ENCODE measurements at regions of chr14 and their contacts with region 1.

Region 1: GRCh38 chr14:67619446-67620216 is at the start of gene ARG2:
- DNase-seq: peak; percentile 98
- H3K4me3 Mint-ChIP-seq: peak within 1 kb of the TSS; percentile 87
- H3K27ac Mint-ChIP-seq: peak within 1 kb of the TSS; percentile 69
- H3K4me1 Mint-ChIP-seq: peaks cover 42% of the 10 kb centered on the region
- H3K27me3 Mint-ChIP-seq: peaks cover 4% of the 10 kb centered on the region
- total RNA-seq, gene ARG2: 20.3 to 20.8 TPM

Region 2: GRCh38 chr14:67583711-67584644 is 35.7 kb before region 1 on chr14:
- CTCF ChIA-PET with region 1: no interaction called
- intact Hi-C with region 1: loop called (anchors 1 kb)
- DNase-seq: peak; percentile 61
- H3K4me3 Mint-ChIP-seq: no peak overlapping the region
- H3K27ac Mint-ChIP-seq: no peak overlapping the region
- H3K4me1 Mint-ChIP-seq: no peaks in the 10 kb centered on the region
- H3K27me3 Mint-ChIP-seq: no peaks in the 10 kb centered on the region

Region 3: DNA sequence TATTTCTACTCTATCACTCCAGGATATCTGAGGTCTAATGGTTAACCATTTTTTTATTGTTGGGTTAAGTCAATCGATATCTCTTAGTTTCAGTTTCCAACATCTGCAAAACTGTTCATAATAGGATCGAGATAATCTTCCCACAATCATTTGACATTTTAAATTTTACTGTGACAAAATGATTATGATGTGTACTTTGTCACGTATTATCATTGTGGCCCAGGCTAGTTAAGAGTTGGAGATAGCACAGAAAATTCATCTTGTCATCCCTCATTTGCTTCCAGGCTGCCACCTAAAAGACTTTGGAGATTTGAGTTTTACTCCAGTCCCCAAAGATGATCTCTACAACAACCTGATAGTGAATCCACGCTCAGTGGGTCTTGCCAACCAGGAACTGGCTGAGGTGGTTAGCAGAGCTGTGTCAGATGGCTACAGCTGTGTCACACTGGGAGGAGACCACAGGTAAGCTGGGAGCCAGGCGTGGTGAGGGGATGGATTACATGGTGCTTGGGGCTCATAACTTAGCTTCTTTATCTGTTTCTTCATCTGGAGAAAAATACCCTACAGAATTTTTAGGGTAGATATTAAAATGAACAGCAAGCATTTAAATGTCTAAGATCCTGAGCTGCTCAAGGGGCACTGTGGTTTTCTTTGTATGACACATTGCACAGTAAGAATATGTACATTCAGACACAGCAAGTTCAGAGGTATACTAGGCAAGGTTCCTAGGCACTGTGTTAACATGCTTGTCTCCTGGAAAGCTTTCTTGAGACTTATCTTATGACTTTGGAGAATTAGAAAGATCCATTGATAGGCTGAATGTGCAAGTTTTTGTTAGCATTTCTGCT is 22.5 kb after region 1 on chr14:
- CTCF ChIA-PET with region 1: interaction called, 10 read pairs
- intact Hi-C with region 1: no loop called
- DNase-seq: no peak
- H3K4me3 Mint-ChIP-seq: no peak overlapping the region
- H3K27ac Mint-ChIP-seq: no peak overlapping the region
- H3K4me1 Mint-ChIP-seq: peaks cover 14% of the 10 kb centered on the region
- H3K27me3 Mint-ChIP-seq: no peaks in the 10 kb centered on the region

Region 4: GRCh38 chr14:67666750-67667449 is 47.3 kb after region 1 on chr14:
- CTCF ChIA-PET with region 1: interaction called, 60 read pairs
- intact Hi-C with region 1: loop called (anchors 1 kb)
- DNase-seq: peak; percentile 55
- H3K4me3 Mint-ChIP-seq: no peak overlapping the region
- H3K27ac Mint-ChIP-seq: no peak overlapping the region
- H3K4me1 Mint-ChIP-seq: peaks cover 50% of the 10 kb centered on the region
- H3K27me3 Mint-ChIP-seq: no peaks in the 10 kb centered on the region

Region 5: DNA sequence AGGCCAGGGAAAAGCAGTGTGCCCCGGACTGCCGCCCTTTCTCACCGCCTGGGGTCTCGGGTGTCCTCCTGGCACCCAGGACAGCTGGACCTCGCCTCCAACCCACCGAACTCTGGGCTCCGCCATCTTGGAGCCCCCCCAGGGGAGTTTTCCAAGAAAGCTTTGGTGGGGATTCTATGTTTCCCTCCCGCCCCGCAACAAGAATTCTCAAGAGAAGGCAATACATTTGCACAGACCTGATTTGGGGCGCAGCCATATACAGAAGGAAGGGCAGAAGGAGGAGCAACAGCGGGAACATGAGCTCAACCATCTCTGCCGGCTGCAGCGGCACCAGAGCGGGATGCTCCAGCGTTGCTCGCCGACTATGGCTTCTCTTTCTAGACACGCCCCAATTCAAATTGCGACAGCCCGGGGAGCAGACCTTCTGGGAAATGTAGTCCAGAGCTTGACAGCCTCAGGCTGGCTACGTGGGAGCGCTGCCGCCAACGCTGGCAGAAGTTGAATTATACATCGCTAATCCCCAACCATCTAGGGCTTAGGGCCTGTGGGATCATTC is 75.8 kb after region 1 on chr14 and contains the start of gene RDH11:
- CTCF ChIA-PET with region 1: interaction called, 14 read pairs
- intact Hi-C with region 1: loop called (anchors 1 kb)
- DNase-seq: peak; percentile 91
- H3K4me3 Mint-ChIP-seq: peak within 1 kb of the TSS; percentile 81
- H3K27ac Mint-ChIP-seq: peak within 1 kb of the TSS; percentile 91
- H3K4me1 Mint-ChIP-seq: peaks cover 22% of the 10 kb centered on the region
- H3K27me3 Mint-ChIP-seq: no peaks in the 10 kb centered on the region
- total RNA-seq, gene RDH11: 58.5 to 64.3 TPM

Region 6: DNA sequence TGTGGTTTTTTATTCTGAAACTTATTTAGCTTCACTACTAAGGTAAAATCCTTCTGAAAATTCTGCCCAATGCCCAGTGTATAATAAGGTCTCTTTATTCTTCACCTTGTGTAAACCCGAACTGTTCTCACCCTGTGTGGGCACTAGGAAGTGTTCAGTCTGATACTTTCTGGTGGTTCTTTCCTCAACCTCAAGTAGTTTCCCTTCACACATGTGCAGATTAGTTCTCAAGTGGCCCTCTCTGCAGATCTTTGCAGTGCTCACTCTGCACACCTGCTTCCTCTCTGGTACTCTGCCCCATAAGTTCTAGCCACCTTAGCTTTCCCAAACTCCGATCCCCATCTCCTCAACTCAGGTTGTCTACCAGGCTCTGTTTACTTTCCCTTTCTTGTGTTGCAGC is 261.6 kb after region 1 on chr14:
- CTCF ChIA-PET with region 1: no interaction called
- intact Hi-C with region 1: no loop called
- DNase-seq: no peak
- H3K4me3 Mint-ChIP-seq: no peak overlapping the region
- H3K27ac Mint-ChIP-seq: no peak overlapping the region
- H3K4me1 Mint-ChIP-seq: peaks cover 21% of the 10 kb centered on the region
- H3K27me3 Mint-ChIP-seq: no peaks in the 10 kb centered on the region